Gastrocnemius medialis (tissue), 4 donors: ENCODE measurements at regions of chr19 and their contacts with region 1.

Region 1: GRCh38 chr19:1189419-1189818 is 15.4 kb upstream of the SBNO2 start:
- DNase-seq: no peak
- ATAC-seq: no peak
- H3K4me3 ChIP-seq: no peak overlapping the region
- H3K27ac ChIP-seq: no peak overlapping the region
- H3K4me1 ChIP-seq: no peaks in the 10 kb centered on the region
- H3K27me3 ChIP-seq: no peaks in the 10 kb centered on the region
- CTCF ChIP-seq: no peak
- POLR2A ChIP-seq: no peak

Region 2: DNA sequence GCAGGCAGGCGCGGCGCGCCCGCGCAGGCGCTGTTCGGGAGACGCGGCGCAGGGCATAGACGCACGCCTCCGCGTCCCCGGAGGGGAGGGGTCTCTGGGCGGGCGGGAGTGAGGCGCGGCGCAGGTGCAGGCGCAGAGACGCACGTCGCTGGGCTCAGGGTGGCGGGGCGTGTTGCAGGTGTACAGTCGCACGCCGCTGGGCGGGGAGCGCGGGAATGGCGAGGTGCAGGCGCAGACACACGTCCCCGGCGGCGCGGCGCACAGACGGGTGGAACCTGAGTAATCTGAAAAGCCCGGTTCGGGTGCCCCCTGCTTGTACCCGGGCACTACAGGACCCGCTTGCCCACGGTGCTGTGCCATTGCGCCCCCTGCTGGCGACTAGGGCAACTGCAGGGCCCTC is 942.9 kb before region 1 on chr19:
- in situ Hi-C with region 1: no loop called
- intact Hi-C with region 1: no loop called
- DNase-seq: no peak
- ATAC-seq: no peak
- H3K4me3 ChIP-seq: no peak overlapping the region
- H3K27ac ChIP-seq: no peak overlapping the region
- H3K4me1 ChIP-seq: no peaks in the 10 kb centered on the region
- H3K27me3 ChIP-seq: no peaks in the 10 kb centered on the region
- CTCF ChIP-seq: no peak
- POLR2A ChIP-seq: no peak

Region 3: DNA sequence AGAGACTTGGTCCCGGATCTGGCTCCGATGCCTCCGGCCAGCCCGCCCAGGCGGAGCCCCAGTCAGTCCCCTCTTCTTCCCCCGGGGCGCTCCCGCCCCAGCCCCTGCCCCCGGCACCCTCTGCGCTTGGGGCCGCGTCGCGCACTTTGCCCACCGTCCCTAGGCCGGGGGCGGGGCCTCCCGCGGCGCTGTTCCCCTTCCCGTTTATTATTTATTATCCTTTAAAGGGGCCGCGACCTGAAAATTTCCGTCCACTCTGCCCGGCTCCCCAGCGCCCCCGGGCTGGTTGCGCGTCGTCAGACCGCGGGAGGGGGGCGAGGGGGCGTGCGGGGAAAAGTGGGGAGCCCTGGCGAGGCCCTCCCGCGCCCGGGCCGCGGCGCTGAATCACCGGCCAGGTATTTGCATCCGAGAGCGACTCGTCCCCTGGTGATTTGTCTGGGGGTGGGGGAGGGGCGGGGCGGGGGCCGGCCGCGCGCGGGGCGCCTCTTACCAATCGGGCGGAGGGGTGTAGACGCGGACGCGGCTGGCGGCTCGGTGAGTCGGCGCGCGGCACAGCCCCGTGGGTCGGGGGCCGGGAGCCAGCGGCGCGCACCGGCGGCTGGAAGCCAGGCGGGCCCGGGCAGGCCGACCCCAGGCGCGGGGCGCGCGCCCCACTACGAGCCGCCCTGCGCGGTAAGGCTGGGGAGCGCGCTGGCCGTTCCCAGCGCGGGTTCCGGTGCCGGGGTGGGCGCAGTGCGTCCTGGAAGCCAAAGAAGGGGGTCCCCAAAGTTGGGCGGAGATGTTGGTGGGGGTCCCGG is 263.7 kb before region 1 on chr19 and contains the start of gene ARID3A:
- in situ Hi-C with region 1: no loop called
- intact Hi-C with region 1: loop called (anchors 5 kb)
- DNase-seq: peak; percentile 61 to 63
- ATAC-seq: peak; percentile 83 to 85
- H3K4me3 ChIP-seq: peak within 1 kb of the TSS; percentile 86 to 96 (median 93)
- H3K27ac ChIP-seq: peak within 1 kb of the TSS; percentile 81 to 91 (median 86)
- H3K4me1 ChIP-seq: peaks cover 5 to 19% of the 10 kb centered on the region in 2 donors
- H3K27me3 ChIP-seq: peaks cover 8% of the 10 kb centered on the region in 3 donors
- CTCF ChIP-seq: peak in 3 of 5 experiments; percentile 2 to 18 (median 16)
- POLR2A ChIP-seq: peak; percentile 59 to 87
- total RNA-seq, gene ARID3A: 1.8 to 9.9 (median 7.8) TPM

Region 4: DNA sequence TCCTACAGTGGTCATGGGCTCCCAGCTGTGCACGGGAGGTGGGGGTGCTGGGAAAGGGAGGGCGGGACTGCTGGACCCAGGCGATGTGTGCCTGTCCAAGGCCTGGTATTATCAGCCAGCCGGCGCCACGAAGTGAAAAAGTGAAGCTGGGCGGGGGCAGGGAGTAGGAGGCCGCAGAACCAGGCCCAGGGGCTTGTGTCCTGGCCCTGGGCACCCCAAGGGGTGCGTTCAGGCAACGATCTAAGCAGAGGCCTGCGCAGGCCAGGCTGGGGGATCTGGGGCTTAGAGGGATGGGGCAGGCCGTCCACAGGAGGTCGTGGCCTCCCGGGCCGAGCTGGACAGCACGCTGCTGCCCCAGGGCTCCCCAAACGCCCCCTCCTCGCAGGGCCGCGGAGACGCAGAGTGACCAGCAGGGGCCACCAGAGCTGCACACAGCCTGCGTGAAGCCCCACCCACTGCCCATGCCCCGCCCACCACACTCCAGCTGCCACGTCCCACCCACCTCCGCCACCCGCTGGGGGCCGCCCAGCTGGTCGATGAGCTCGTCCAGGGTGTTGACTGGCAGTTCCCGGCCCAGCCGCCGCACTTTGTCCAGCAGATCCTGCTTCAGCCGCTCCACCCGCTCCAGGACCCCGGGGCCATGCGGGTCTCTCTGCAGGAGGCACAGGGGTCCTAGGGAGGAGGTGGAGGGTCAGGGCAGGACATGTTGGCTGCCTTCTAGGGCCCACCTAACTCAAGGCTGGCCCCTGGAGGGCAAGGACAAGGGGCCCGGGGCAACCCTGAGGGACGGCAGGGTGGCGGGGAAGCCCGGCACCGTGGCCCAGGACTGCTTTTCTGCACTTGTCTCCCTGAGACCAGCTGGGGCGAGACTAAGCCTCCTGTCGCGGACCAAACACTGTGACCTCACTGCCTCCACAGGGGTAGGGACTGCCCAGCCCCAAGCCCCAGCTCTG is 76.1 kb before region 1 on chr19:
- in situ Hi-C with region 1: loop called in 3 of 4 experiments (anchors 5 to 10 kb)
- intact Hi-C with region 1: loop called (anchors 5 kb)
- DNase-seq: peak; percentile 92 to 95
- ATAC-seq: peak; percentile 81 to 86
- H3K4me3 ChIP-seq: peak overlapping the region in 2 of 4 donors; percentile 12 to 29
- H3K27ac ChIP-seq: peak overlapping the region; percentile 73 to 81 (median 80)
- H3K4me1 ChIP-seq: peaks cover 5 to 12% of the 10 kb centered on the region in 2 donors
- H3K27me3 ChIP-seq: no peaks in the 10 kb centered on the region
- CTCF ChIP-seq: peak; percentile 93 to 99 (median 98)
- POLR2A ChIP-seq: peak in 1 of 2 donors; percentile 44

Region 5: GRCh38 chr19:1131738-1132551 is 57.5 kb before region 1 on chr19:
- in situ Hi-C with region 1: loop called in 1 of 4 experiments (anchors 10 kb)
- intact Hi-C with region 1: loop called (anchors 5 kb)
- DNase-seq: peak; percentile 53 to 58
- ATAC-seq: peak; percentile 65 to 66
- H3K4me3 ChIP-seq: peak overlapping the region; percentile 56 to 69 (median 61)
- H3K27ac ChIP-seq: peak overlapping the region; percentile 56 to 81 (median 76)
- H3K4me1 ChIP-seq: peaks cover 21 to 32% of the 10 kb centered on the region in 2 donors
- H3K27me3 ChIP-seq: no peaks in the 10 kb centered on the region
- CTCF ChIP-seq: peak in 1 of 5 experiments; percentile 4
- POLR2A ChIP-seq: peak; percentile 37 to 46